Heart left ventricle (tissue), 16 donors: ENCODE measurements at regions of chr1 and their contacts with region 1.

Region 1: GRCh38 chr1:3410142-3410925 is 44.1 kb upstream of the ARHGEF16 start:
- DNase-seq: peak in 4 of 5 donors; percentile 64 to 78 (median 67)
- ATAC-seq: peak; percentile 73 to 90 (median 81)
- H3K4me3 ChIP-seq: no peak overlapping the region
- H3K27ac ChIP-seq: peak overlapping the region in 1 of 12 donors; percentile 11
- H3K4me1 ChIP-seq: peaks cover 0 to 26% (median 5%) of the 10 kb centered on the region in 12 donors
- H3K27me3 ChIP-seq: no peaks in the 10 kb centered on the region
- CTCF ChIP-seq: peak; percentile 44 to 81 (median 70)
- POLR2A ChIP-seq: no peak

Region 2: GRCh38 chr1:3012456-3013291 is 397.7 kb before region 1 on chr1:
- intact Hi-C with region 1: loop called in 2 of 10 experiments (anchors 2 to 5 kb)
- DNase-seq: peak; percentile 35 to 81 (median 42)
- ATAC-seq: peak in 3 of 4 donors; percentile 74 to 88 (median 79)
- H3K4me3 ChIP-seq: no peak overlapping the region
- H3K27ac ChIP-seq: no peak overlapping the region
- H3K4me1 ChIP-seq: peaks cover 0 to 7% (median 0%) of the 10 kb centered on the region in 12 donors
- H3K27me3 ChIP-seq: peaks cover 0 to 41% (median 6%) of the 10 kb centered on the region in 9 donors
- CTCF ChIP-seq: peak; percentile 74 to 96 (median 80)
- POLR2A ChIP-seq: no peak

Region 3: DNA sequence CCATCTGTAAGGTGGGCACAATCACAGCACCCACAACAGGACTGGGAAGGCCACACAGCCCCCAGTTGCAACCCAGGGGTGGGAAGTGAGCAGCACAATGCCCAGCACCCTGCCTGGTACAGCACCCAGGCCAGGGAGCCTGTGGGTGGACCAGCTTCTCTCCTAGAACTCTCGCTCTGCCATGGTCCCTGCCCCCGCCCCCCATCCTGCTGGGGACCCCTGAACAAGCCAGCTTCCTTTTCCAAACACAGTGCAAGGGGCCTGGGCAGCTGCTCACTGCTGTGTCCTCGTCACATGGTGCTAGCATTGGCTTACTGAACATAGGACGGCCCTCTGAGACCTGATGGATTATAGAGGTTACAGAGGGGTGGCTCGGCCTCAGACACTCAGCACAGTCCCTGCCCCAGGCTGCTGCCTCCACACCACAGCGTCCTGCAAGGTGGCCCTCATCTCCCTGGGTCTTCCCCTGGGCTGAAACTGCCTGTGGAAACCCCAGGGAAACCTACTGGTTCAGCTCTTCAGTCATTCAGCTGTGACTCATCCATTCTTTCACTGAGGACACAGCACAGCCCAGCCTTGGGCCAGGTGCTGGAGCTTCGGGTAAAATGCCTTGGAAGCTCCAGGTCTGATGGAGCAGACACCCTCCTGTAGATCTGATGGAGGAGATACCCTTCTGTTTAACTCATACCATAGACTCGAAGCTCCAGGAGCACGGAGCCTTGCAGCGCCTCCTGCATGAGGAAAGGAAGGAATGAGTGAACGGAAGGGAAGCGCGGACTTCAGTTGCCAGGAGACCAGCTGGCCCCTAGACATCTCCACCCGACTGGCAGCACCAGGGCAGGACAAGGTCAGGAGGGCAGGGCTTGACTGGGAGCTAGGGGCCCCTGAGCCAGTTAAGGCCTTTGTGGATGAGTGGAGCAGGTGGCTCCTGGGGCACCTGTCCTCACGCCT is 349.5 kb before region 1 on chr1:
- intact Hi-C with region 1: loop called in 5 of 10 experiments (anchors 1 to 5 kb)
- DNase-seq: peak in 1 of 5 donors; percentile 40
- ATAC-seq: no peak
- H3K4me3 ChIP-seq: no peak overlapping the region
- H3K27ac ChIP-seq: no peak overlapping the region
- H3K4me1 ChIP-seq: peaks cover 0 to 34% (median 8%) of the 10 kb centered on the region in 12 donors
- H3K27me3 ChIP-seq: peaks cover 7 to 42% (median 24%) of the 10 kb centered on the region in 9 donors
- CTCF ChIP-seq: no peak
- POLR2A ChIP-seq: no peak

Region 4: GRCh38 chr1:3319874-3320245 is 90.5 kb before region 1 on chr1:
- intact Hi-C with region 1: loop called in 2 of 10 experiments (anchors 5 kb)
- DNase-seq: peak in 1 of 5 donors; percentile 25
- ATAC-seq: peak in 3 of 4 donors; percentile 25 to 35 (median 33)
- H3K4me3 ChIP-seq: no peak overlapping the region
- H3K27ac ChIP-seq: no peak overlapping the region
- H3K4me1 ChIP-seq: peaks cover 4 to 56% (median 26%) of the 10 kb centered on the region in 12 donors
- H3K27me3 ChIP-seq: peaks cover 0 to 8% (median 0%) of the 10 kb centered on the region in 9 donors
- CTCF ChIP-seq: peak; percentile 51 to 74 (median 68)
- POLR2A ChIP-seq: no peak

Region 5: GRCh38 chr1:3327936-3328590 is 82.3 kb before region 1 on chr1:
- intact Hi-C with region 1: loop called in 2 of 10 experiments (anchors 5 kb)
- DNase-seq: peak; percentile 69 to 95 (median 79)
- ATAC-seq: peak; percentile 85 to 87 (median 86)
- H3K4me3 ChIP-seq: no peak overlapping the region
- H3K27ac ChIP-seq: peak overlapping the region in 10 of 12 donors; percentile 2 to 86 (median 55)
- H3K4me1 ChIP-seq: peaks cover 4 to 61% (median 22%) of the 10 kb centered on the region in 12 donors
- H3K27me3 ChIP-seq: peaks cover 0 to 6% (median 0%) of the 10 kb centered on the region in 9 donors
- CTCF ChIP-seq: no peak
- POLR2A ChIP-seq: no peak

Region 6: DNA sequence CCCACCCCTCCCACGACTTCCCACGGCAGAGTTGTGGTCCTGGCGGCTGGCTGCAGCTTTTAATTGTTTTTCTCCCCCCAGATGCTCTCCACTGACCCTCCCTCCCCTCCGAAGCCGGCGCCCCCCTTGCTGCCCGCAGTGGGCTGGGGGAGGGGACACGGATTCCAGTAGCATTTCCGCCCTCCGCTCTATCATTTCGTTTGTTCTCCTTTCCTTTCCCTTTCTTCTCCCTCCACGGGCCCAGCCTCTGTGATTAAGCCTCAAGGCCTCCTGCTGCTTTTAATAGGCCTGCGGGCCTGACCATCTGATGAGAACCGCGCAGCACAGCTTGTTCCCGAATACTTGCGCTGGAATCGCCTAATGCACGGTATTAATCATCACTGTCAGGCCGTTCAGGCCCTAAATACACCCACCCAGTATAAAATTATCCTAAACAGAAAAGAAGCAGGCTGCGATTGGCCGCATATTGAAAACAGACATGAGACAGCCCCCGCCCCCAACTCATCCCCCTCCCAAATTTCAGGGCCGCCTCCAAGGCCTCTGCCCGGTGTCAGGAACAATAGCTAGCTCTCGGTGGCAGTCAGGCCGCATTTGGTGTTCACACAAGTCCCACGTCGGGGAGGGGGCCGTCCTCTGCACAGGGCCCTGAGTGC is 57.9 kb before region 1 on chr1:
- intact Hi-C with region 1: loop called in 1 of 10 experiments (anchors 1 kb)
- DNase-seq: peak in 2 of 5 donors; percentile 53 to 84
- ATAC-seq: peak in 2 of 4 donors; percentile 2 to 18
- H3K4me3 ChIP-seq: no peak overlapping the region
- H3K27ac ChIP-seq: peak overlapping the region; percentile 60 to 98 (median 90)
- H3K4me1 ChIP-seq: peaks cover 0 to 87% (median 52%) of the 10 kb centered on the region in 12 donors
- H3K27me3 ChIP-seq: peaks cover 0 to 20% (median 0%) of the 10 kb centered on the region in 9 donors
- CTCF ChIP-seq: no peak
- POLR2A ChIP-seq: peak in 1 of 2 donors; percentile 18